ENCODE measurements at regions of chr20 and their contacts with region 1.

Region 1: DNA sequence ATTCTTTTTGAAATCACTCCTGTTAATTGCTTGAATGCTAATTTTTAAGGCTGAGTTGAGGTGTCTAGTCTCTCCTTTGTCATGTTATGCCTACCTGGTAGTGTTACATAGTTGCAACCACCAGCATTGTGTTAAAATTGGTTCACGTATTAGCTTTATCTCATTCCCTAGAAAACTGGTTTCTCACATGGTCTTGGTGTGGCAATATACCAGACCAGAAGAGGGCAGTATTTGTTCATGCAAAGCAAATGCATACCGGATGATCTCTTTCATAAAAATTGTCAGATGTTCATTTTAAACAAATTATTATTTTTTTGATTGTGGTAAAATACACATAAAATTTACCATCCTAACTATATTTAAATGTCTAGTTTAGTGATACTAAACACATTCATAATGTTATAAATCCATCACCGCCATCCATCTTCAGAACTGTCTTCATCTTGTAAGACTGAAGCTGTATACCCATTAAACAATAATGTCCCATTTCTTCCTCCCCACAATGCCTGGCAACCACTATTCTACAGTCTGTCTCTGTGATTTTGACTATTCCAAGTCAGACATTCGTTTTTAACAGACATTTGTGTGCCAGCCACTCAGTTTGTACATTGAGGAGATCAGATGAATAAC is 92.8 kb downstream of the ATRN start:
- DNase-seq: peak; percentile 58
- H3K4me3 ChIP-seq: no peak overlapping the region
- H3K27ac ChIP-seq: no peak overlapping the region
- H3K4me1 ChIP-seq: no peaks in the 10 kb centered on the region
- H3K27me3 ChIP-seq: no peaks in the 10 kb centered on the region
- CTCF ChIP-seq: peak; percentile 48 to 55
- POLR2A ChIP-seq: no peak

Region 2: DNA sequence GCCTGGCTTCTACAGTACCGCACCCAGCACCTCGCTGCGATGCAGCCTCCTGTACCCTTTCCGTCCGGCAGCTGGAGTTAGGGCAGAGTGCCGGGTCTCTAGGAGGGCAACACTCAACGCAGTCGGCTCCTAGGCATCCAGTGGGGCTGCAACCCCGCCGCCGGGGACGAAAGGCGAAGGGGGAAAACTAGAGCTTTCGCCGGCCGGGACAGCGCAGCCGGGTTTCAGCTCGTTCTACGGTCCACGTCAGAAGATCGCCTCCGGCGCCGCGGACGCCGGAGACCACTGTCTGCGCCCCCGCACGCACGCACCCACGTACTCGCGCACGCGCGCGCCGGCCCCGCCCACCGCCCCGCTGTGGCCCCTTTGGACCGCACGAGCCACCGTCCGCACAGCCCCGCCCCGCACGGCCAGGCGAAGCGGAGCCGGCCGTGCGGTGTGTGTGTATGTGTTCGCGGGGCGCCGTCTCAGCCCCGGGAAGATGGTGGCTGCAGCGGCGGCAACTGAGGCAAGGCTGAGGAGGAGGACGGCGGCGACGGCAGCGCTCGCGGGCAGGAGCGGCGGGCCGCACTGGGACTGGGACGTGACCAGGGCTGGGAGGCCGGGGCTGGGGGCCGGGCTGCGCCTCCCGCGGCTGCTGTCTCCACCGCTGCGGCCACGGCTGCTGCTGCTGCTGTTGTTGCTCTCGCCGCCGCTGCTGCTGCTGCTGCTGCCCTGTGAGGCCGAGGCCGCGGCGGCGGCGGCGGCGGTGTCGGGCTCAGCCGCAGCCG is 92.9 kb before region 1 on chr20 and contains the start of gene ATRN:
- CTCF ChIA-PET with region 1: interaction called, 11 read pairs
- POLR2A ChIA-PET with region 1: no interaction called
- dilution Hi-C with region 1: no loop called
- intact Hi-C with region 1: no loop called
- DNase-seq: peak; percentile 93
- H3K4me3 ChIP-seq: peak within 1 kb of the TSS; percentile 79 to 87 (median 85)
- H3K27ac ChIP-seq: peak within 1 kb of the TSS; percentile 79
- H3K4me1 ChIP-seq: peaks cover 11% of the 10 kb centered on the region
- H3K27me3 ChIP-seq: peaks cover 10 to 16% of the 10 kb centered on the region in 2 experiments
- CTCF ChIP-seq: no peak
- POLR2A ChIP-seq: peak; percentile 98
- total RNA-seq, gene ATRN: 33.1 and 35.1 TPM in 2 replicates

Region 3: GRCh38 chr20:3543901-3544507 is 19.7 kb before region 1 on chr20:
- CTCF ChIA-PET with region 1: interaction called, 32 read pairs
- POLR2A ChIA-PET with region 1: no interaction called
- dilution Hi-C with region 1: no loop called
- intact Hi-C with region 1: no loop called
- DNase-seq: no peak
- H3K4me3 ChIP-seq: no peak overlapping the region
- H3K27ac ChIP-seq: no peak overlapping the region
- H3K4me1 ChIP-seq: no peaks in the 10 kb centered on the region
- H3K27me3 ChIP-seq: no peaks in the 10 kb centered on the region
- CTCF ChIP-seq: no peak
- POLR2A ChIP-seq: no peak

Region 4: DNA sequence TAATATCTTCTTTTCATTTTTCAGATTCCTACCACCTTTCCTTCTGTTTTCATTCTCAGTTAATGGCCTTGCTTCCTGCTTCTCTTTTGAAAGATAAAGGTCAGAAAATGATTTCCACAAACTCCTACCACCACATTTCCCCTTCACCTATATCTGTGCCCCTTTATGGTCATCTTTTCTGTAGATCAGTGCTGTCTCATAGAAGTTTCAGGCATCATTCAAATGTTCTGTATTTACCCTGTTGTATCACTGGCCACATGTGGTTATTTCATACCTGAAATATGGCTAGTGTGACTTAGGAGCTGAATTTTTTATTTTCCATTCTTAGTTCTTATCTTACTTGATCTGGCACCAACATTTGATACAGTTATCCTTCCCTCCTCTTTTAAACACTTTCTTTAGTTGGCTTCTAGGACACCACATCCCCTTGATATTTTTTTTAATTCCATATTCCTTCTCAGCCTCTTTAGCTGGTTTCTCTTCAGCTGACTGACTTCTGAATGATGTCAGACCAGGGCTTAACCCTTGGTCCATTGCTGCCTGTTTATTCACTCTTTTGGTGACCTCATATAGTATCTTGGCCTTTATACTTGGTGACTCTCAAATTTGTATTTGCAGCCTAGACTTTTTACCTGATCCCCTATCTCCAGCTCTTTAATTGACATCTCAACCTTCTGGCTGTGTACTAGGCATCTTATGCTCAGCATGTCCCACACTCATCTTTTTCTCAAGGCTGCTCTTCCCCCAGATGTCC is 11.8 kb before region 1 on chr20:
- CTCF ChIA-PET with region 1: interaction called, 32 read pairs
- POLR2A ChIA-PET with region 1: no interaction called
- dilution Hi-C with region 1: no loop called
- intact Hi-C with region 1: no loop called
- DNase-seq: no peak
- H3K4me3 ChIP-seq: no peak overlapping the region
- H3K27ac ChIP-seq: no peak overlapping the region
- H3K4me1 ChIP-seq: no peaks in the 10 kb centered on the region
- H3K27me3 ChIP-seq: no peaks in the 10 kb centered on the region
- CTCF ChIP-seq: no peak
- POLR2A ChIP-seq: no peak

Region 5: DNA sequence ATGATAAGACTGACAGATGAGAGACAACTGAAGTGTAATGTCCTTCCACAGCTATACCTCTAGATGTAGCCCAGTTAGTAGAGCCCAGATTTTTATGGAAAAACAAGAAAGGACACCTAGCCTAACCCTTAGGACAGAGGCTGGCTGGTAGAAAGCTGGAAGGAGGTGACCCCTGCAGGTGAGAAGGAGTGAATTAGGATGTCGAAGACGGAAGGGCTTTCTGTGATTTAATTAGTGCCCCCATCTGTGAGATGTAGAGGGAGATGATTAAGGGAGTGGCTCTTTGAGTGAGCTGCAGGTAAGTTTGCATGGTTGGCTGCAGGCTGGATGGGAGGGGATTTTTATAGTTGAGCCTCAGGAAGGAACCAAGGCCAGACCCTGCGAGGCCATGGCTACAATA is 16.7 kb after region 1 on chr20:
- CTCF ChIA-PET with region 1: interaction called, 49 read pairs
- POLR2A ChIA-PET with region 1: no interaction called
- dilution Hi-C with region 1: no loop called
- intact Hi-C with region 1: no loop called
- DNase-seq: no peak
- H3K4me3 ChIP-seq: no peak overlapping the region
- H3K27ac ChIP-seq: no peak overlapping the region
- H3K4me1 ChIP-seq: no peaks in the 10 kb centered on the region
- H3K27me3 ChIP-seq: no peaks in the 10 kb centered on the region
- CTCF ChIP-seq: no peak
- POLR2A ChIP-seq: no peak

Region 6: GRCh38 chr20:3612795-3613572 is 49.3 kb after region 1 on chr20:
- CTCF ChIA-PET with region 1: interaction called, 10 read pairs
- POLR2A ChIA-PET with region 1: no interaction called
- dilution Hi-C with region 1: no loop called
- intact Hi-C with region 1: no loop called
- DNase-seq: no peak
- H3K4me3 ChIP-seq: no peak overlapping the region
- H3K27ac ChIP-seq: no peak overlapping the region
- H3K4me1 ChIP-seq: no peaks in the 10 kb centered on the region
- H3K27me3 ChIP-seq: no peaks in the 10 kb centered on the region
- CTCF ChIP-seq: no peak
- POLR2A ChIP-seq: no peak

Region 7: GRCh38 chr20:3632311-3633004 is 68.8 kb after region 1 on chr20:
- CTCF ChIA-PET with region 1: interaction called, 11 read pairs
- POLR2A ChIA-PET with region 1: no interaction called
- dilution Hi-C with region 1: no loop called
- intact Hi-C with region 1: loop called (anchors 2 kb)
- DNase-seq: no peak
- H3K4me3 ChIP-seq: no peak overlapping the region
- H3K27ac ChIP-seq: no peak overlapping the region
- H3K4me1 ChIP-seq: no peaks in the 10 kb centered on the region
- H3K27me3 ChIP-seq: no peaks in the 10 kb centered on the region
- CTCF ChIP-seq: no peak
- POLR2A ChIP-seq: no peak